Panc1 (cell line): ENCODE measurements at regions of chr15 and their contacts with region 1.

Region 1: GRCh38 chr15:79505956-79506355 is 73.8 kb downstream of the MINAR1 start:
- DNase-seq: no peak
- ATAC-seq: no peak
- H3K4me3 ChIP-seq: no peak overlapping the region
- H3K27ac ChIP-seq: no peak overlapping the region
- H3K4me1 ChIP-seq: no peaks in the 10 kb centered on the region
- H3K27me3 ChIP-seq: peaks cover 16% of the 10 kb centered on the region
- CTCF ChIP-seq: no peak

Region 2: DNA sequence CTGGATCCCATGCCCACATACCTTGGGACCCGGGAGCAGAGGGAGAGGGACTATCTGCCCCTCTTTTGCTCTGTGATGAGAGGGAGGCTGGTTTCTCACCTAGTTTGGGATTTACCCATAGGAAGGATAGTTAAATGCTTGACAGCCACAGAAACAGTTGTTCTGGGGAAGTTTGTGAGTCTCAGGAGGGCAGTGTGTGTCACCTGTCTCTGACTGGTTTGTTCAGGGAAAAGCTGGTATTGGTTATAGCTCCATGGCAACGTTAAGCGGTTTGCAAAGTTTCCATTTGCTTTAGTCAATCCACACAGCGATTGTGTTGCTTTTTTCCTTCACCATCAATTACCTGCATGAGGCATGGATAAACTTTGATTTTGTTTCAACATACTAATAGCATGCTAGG is 198.7 kb before region 1 on chr15:
- CTCF ChIA-PET with region 1: no interaction called
- POLR2A ChIA-PET with region 1: no interaction called
- in situ Hi-C with region 1: no loop called
- intact Hi-C with region 1: no loop called
- DNase-seq: no peak
- ATAC-seq: no peak
- H3K4me3 ChIP-seq: no peak overlapping the region
- H3K27ac ChIP-seq: no peak overlapping the region
- H3K4me1 ChIP-seq: peaks cover 10% of the 10 kb centered on the region; the same call in 1 of the 2 replicates
- H3K27me3 ChIP-seq: peaks cover 59% of the 10 kb centered on the region
- CTCF ChIP-seq: no peak

Region 3: GRCh38 chr15:79516646-79517045 is 10.7 kb after region 1 on chr15:
- CTCF ChIA-PET with region 1: no interaction called
- POLR2A ChIA-PET with region 1: no interaction called
- in situ Hi-C with region 1: no loop called
- intact Hi-C with region 1: loop called (anchors 1 kb)
- DNase-seq: no peak
- ATAC-seq: no peak
- H3K4me3 ChIP-seq: no peak overlapping the region
- H3K27ac ChIP-seq: no peak overlapping the region
- H3K4me1 ChIP-seq: no peaks in the 10 kb centered on the region
- H3K27me3 ChIP-seq: peaks cover 13% of the 10 kb centered on the region
- CTCF ChIP-seq: no peak

Region 4: GRCh38 chr15:79529157-79529785 is 23.3 kb after region 1 on chr15:
- CTCF ChIA-PET with region 1: no interaction called
- POLR2A ChIA-PET with region 1: no interaction called
- in situ Hi-C with region 1: no loop called
- intact Hi-C with region 1: no loop called
- DNase-seq: no peak
- ATAC-seq: no peak
- H3K4me3 ChIP-seq: no peak overlapping the region
- H3K27ac ChIP-seq: no peak overlapping the region
- H3K4me1 ChIP-seq: no peaks in the 10 kb centered on the region
- H3K27me3 ChIP-seq: peaks cover 10% of the 10 kb centered on the region; the same call in 1 of the 2 replicates
- CTCF ChIP-seq: no peak

Region 5: GRCh38 chr15:79765028-79765546 is 259.1 kb after region 1 on chr15:
- CTCF ChIA-PET with region 1: no interaction called
- POLR2A ChIA-PET with region 1: no interaction called
- in situ Hi-C with region 1: no loop called
- intact Hi-C with region 1: no loop called
- DNase-seq: no peak
- ATAC-seq: no peak
- H3K4me3 ChIP-seq: no peak overlapping the region
- H3K27ac ChIP-seq: no peak overlapping the region
- H3K4me1 ChIP-seq: no peaks in the 10 kb centered on the region
- H3K27me3 ChIP-seq: peaks cover 16% of the 10 kb centered on the region; the same call in 1 of the 2 replicates
- CTCF ChIP-seq: no peak